ENCODE measurements at regions of chr13 and their contacts with region 1.

Region 1: DNA sequence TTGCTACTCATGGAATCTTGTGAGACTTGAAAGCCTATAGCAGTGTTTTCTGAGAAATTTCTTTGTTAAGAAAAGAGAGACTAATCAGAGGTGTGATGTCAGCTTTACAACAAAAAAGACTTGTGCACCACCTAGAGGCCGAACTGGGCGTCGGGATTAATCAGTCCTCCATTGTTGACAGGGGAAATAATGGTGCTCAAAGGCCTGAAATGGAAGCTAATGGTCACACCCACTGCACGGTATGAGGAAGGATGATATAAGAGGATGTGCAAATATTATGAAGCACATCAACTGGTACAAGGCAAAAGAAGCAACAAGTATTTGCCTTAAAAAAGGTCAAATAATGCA is 480.2 kb upstream of the MIR17HG start:
- DNase-seq: peak; percentile 84
- H3K4me3 Mint-ChIP-seq: no peak overlapping the region
- H3K27ac Mint-ChIP-seq: no peak overlapping the region
- H3K4me1 Mint-ChIP-seq: peaks cover 6% of the 10 kb centered on the region
- H3K27me3 Mint-ChIP-seq: no peaks in the 10 kb centered on the region
- CTCF ChIP-seq: peak; percentile 57

Region 2: GRCh38 chr13:89432997-89433396 is 1434.3 kb before region 1 on chr13:
- CTCF ChIA-PET with region 1: no interaction called
- POLR2A ChIA-PET with region 1: no interaction called
- intact Hi-C with region 1: loop called (anchors 5 kb)
- DNase-seq: no peak
- H3K4me3 Mint-ChIP-seq: no peak overlapping the region
- H3K27ac Mint-ChIP-seq: no peak overlapping the region
- H3K4me1 Mint-ChIP-seq: no peaks in the 10 kb centered on the region
- H3K27me3 Mint-ChIP-seq: no peaks in the 10 kb centered on the region
- CTCF ChIP-seq: no peak

Region 3: GRCh38 chr13:89695343-89696257 is 1171.7 kb before region 1 on chr13:
- CTCF ChIA-PET with region 1: interaction called, 16 read pairs
- POLR2A ChIA-PET with region 1: no interaction called
- intact Hi-C with region 1: loop called (anchors 5 kb)
- DNase-seq: peak; percentile 66
- H3K4me3 Mint-ChIP-seq: no peak overlapping the region
- H3K27ac Mint-ChIP-seq: no peak overlapping the region
- H3K4me1 Mint-ChIP-seq: no peaks in the 10 kb centered on the region
- H3K27me3 Mint-ChIP-seq: no peaks in the 10 kb centered on the region
- CTCF ChIP-seq: peak; percentile 70

Region 4: GRCh38 chr13:90365130-90365529 is 502.2 kb before region 1 on chr13:
- CTCF ChIA-PET with region 1: no interaction called
- POLR2A ChIA-PET with region 1: no interaction called
- intact Hi-C with region 1: loop called (anchors 5 kb)
- DNase-seq: peak; percentile 11
- H3K4me3 Mint-ChIP-seq: no peak overlapping the region
- H3K27ac Mint-ChIP-seq: no peak overlapping the region
- H3K4me1 Mint-ChIP-seq: no peaks in the 10 kb centered on the region
- H3K27me3 Mint-ChIP-seq: no peaks in the 10 kb centered on the region
- CTCF ChIP-seq: peak; percentile 29

Region 5: DNA sequence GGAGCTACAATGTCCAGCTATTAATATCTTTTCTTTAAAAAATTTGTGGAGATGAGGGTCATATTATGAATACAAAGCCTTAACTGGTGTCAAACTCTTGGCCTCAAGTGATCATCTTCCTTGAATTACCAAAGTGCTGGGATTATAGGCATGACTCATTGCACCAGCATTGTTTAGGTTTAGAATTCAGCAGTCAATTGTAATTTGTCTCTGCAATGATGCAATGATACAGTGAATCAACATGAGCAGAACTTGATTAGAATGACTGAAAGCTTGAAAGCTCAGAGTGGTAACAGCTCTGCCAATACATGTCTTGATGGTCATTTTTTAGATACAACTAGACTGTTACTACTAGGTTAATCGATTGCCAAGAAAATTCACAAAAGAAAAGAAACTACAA is 272.6 kb before region 1 on chr13:
- CTCF ChIA-PET with region 1: no interaction called
- POLR2A ChIA-PET with region 1: no interaction called
- intact Hi-C with region 1: loop called (anchors 2 kb)
- DNase-seq: peak; percentile 89
- H3K4me3 Mint-ChIP-seq: no peak overlapping the region
- H3K27ac Mint-ChIP-seq: no peak overlapping the region
- H3K4me1 Mint-ChIP-seq: peaks cover 6% of the 10 kb centered on the region
- H3K27me3 Mint-ChIP-seq: no peaks in the 10 kb centered on the region
- CTCF ChIP-seq: no peak

Region 6: DNA sequence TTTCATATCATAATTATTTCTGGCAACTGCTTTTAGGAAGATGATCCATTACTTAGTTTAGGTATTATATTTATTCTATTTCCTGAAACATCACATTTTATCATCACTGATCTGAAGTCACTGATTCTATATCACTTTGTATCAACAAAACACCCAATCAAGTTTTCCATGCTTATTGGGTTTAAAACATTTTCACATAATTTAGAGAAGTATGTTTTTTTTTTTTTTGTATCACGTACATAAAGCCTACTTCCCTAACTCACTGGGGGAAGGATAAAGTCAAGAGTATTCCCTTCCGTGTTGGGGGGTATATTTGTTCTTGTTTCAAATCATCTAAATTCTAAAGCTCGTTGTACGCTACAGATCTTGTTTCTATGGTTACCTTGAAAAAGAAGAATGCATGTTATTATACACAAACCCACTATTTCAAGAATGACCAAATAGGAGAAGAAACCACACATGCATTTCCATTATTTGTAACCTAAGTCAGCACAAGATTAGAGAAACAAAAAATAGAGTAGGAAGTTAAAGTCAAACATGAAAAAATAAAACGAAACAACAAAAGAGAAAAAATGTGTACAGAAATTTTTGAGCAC is 157.0 kb before region 1 on chr13:
- CTCF ChIA-PET with region 1: no interaction called
- POLR2A ChIA-PET with region 1: no interaction called
- intact Hi-C with region 1: no loop called
- DNase-seq: no peak
- H3K4me3 Mint-ChIP-seq: no peak overlapping the region
- H3K27ac Mint-ChIP-seq: no peak overlapping the region
- H3K4me1 Mint-ChIP-seq: no peaks in the 10 kb centered on the region
- H3K27me3 Mint-ChIP-seq: no peaks in the 10 kb centered on the region
- CTCF ChIP-seq: no peak

Region 7: DNA sequence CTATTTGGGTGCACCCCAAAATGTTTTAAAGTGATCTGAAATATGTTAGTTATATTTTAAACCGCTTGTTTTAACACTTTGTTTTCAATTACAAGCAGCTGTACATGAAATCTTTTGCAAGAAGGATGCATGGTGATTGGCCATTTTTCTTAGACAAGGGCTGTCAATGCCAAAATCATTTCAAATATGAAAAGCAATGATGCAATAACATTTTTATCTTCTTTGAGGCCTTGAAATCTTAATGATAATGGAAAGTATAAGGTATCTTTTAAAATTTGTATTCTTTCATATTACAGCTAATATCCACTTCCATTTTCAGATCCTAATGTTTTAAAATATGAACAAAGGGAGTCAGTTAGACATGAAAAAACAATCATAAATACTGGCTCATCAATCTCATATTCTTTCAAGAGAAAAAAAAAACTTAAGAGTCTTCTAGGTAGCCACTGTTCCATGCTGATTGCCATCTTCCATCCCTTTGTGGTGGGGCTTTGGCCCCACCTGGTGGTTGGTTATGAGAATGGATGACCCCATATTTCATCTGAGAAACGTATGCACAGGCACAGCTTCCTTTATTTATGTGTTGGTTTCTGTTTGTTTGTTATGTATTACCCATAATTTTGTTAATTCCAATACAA is 149.8 kb after region 1 on chr13:
- CTCF ChIA-PET with region 1: interaction called, 17 read pairs
- POLR2A ChIA-PET with region 1: interaction called, 3 read pairs
- intact Hi-C with region 1: loop called (anchors 5 kb)
- DNase-seq: peak; percentile 80
- H3K4me3 Mint-ChIP-seq: no peak overlapping the region
- H3K27ac Mint-ChIP-seq: no peak overlapping the region
- H3K4me1 Mint-ChIP-seq: peaks cover 9% of the 10 kb centered on the region
- H3K27me3 Mint-ChIP-seq: no peaks in the 10 kb centered on the region
- CTCF ChIP-seq: peak; percentile 73

Measured in MCF 10A (cell line).